Activated CD4-positive, alpha-beta memory T cell treated with anti-CD3 and anti-CD28 coated beads for 36 hours (primary cell): ENCODE measurements at regions of chr22 and their contacts with region 1.

Region 1: GRCh38 chr22:30485362-30485988 is 13.7 kb upstream of the SEC14L3 start:
- DNase-seq: peak; percentile 83
- H3K4me3 Mint-ChIP-seq: no peak overlapping the region
- H3K27ac Mint-ChIP-seq: no peak overlapping the region
- H3K4me1 Mint-ChIP-seq: no peaks in the 10 kb centered on the region
- H3K27me3 Mint-ChIP-seq: no peaks in the 10 kb centered on the region

Region 2: GRCh38 chr22:30444632-30445437 is 40.6 kb before region 1 on chr22:
- CTCF ChIA-PET with region 1: interaction called, 35 read pairs
- POLR2A ChIA-PET with region 1: no interaction called
- intact Hi-C with region 1: loop called (anchors 2 kb)
- DNase-seq: peak; percentile 78
- H3K4me3 Mint-ChIP-seq: no peak overlapping the region
- H3K27ac Mint-ChIP-seq: no peak overlapping the region
- H3K4me1 Mint-ChIP-seq: peaks cover 19% of the 10 kb centered on the region
- H3K27me3 Mint-ChIP-seq: peaks cover 33% of the 10 kb centered on the region